Naive thymus-derived CD8-positive, alpha-beta T cell (primary cell): ENCODE measurements at regions of chr1 and their contacts with region 1.

Region 1: DNA sequence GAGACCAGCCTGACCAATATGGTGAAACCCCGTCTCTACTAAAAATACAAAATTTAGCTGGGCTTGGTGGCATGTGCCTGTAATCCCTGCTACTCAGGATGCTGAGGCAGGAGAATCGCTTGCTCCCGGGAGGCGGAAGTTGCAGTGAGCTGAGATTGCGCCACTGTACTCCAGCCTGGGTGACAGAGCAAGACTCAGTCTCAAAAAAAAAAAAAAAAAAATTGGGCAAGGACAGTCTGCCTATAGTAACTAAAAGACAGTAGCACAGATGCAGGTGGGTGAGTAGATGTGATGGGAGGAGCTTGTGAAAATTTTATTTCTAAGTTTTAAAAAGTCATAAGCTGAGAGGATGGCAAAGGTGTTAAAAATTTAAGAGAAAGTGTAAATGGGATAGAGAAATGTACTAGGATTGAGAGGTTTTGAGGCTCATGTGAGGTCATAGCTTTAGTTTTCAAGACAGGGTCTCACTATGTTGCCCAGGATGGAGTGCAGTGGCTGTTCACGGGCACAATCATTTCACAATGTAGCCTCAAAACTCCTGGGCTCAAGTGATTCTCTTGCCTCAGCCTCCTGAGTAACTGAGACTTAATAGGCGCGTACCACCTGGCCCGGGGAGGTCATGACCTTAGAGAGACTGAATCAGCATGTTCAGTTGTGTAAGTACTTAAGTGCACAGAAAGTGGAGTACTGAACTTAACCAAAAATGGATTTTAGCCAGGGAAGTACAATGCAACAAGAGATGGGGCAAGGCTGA is 33.7 kb downstream of the PTP4A2 start:
- DNase-seq: no peak
- ATAC-seq: peak in 1 of 2 donors; percentile 31
- H3K4me3 Mint-ChIP-seq: no peak overlapping the region
- H3K27ac Mint-ChIP-seq: peak overlapping the region; percentile 15 to 90 (median 70)
- H3K4me1 Mint-ChIP-seq: peaks cover 16 to 58% (median 37%) of the 10 kb centered on the region in 4 donors
- H3K27me3 Mint-ChIP-seq: no peaks in the 10 kb centered on the region

Region 2: DNA sequence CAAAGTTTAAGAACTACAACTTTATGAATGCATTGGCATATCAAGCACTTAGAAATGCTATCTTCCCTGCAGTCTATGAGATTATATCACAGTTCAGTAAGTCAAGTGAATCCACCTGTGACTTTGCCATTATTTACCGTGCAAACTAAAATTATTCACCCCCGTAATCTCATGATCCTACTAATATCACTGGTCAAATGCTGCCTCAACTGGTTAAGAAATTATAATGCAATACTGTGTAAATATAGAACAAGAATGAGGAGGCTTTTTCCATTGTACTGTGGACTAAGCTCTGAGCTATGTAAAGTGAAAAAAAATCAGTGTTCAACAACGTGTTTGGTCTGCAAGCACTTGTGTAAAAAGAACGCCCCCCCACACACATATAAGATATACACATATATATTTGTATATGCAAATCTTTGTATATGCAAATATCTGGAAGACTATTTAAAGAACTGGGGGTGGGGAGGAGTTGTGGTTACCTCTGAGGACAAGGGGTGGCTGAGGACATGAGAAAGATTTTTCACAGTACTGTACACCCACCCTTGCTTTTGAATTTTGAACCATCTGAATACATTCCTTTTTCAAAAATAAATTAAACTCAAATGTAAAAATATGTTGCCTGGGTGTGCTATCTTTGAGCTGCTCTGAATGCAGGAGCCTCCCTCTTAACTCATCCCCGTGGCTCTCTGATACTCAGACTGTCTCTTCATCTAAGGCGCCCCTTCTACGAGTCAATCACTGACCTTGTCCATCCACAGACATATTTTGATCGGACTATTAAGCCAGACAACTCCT is 23.4 kb before region 1 on chr1:
- POLR2A ChIA-PET with region 1: no interaction called
- DNase-seq: no peak
- ATAC-seq: no peak
- H3K4me3 Mint-ChIP-seq: peak overlapping the region in 1 of 10 donors; percentile 19
- H3K27ac Mint-ChIP-seq: peak overlapping the region in 1 of 10 donors; percentile 69
- H3K4me1 Mint-ChIP-seq: peaks cover 13 to 37% (median 32%) of the 10 kb centered on the region in 4 donors
- H3K27me3 Mint-ChIP-seq: no peaks in the 10 kb centered on the region

Region 3: DNA sequence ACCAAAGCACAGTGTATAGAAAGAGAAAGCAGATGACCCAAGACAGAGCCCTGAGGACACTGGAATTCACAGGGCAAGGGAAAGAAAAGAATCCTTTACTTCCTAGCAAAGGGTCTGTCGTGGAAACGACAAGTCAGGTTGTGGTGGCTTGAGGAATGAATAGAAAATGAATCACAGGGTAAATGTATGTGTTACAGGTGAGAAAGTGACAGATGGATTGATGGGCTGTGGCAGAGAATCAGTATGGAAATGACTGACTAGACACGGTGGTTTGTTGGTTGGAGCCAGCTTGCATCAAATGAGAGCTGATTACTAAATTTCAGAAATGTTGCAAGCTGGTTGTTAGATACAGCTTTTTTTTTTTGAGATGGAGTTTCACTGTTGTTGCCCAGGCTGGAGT is 13.2 kb before region 1 on chr1:
- POLR2A ChIA-PET with region 1: interaction called, 11 read pairs
- DNase-seq: no peak
- ATAC-seq: no peak
- H3K4me3 Mint-ChIP-seq: no peak overlapping the region
- H3K27ac Mint-ChIP-seq: peak overlapping the region in 4 of 10 donors; percentile 15 to 99 (median 72)
- H3K4me1 Mint-ChIP-seq: peaks cover 9 to 28% (median 23%) of the 10 kb centered on the region in 4 donors
- H3K27me3 Mint-ChIP-seq: no peaks in the 10 kb centered on the region